Activated B cell treated with CpG ODN at 0.5 μM for 24 hours (primary cell): ENCODE measurements at regions of chr4 and their contacts with region 1.

Region 1: GRCh38 chr4:101790521-101791188 is at the start of gene BANK1:
- DNase-seq: peak; percentile 86
- ATAC-seq: peak; percentile 89
- H3K4me3 Mint-ChIP-seq: peak within 1 kb of the TSS; percentile 97
- H3K27ac Mint-ChIP-seq: peak within 1 kb of the TSS; percentile 99
- H3K4me1 Mint-ChIP-seq: peaks cover 66% of the 10 kb centered on the region
- H3K27me3 Mint-ChIP-seq: no peaks in the 10 kb centered on the region
- CTCF ChIP-seq: peak; percentile 37
- total RNA-seq, gene BANK1: 307 and 336 TPM in 2 replicates

Region 2: DNA sequence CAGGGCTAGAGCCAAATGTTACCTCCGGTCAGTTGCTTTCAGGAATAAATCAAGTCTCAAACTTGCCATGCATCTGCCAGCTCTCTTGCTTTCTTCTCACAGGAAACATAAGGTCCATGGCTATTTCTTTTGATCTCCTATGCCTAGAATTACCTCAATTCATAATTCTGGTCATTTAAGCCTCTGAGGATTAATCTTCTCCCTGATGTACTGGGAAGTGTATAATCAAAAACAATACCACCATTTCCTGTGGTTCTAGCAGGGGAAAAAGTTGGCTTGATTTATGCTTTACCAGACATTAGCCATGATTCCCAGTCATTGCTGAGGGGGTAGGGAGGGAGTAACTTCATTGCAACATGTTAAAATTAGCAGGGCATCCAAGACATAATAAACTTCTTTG is 1004.2 kb before region 1 on chr4:
- CTCF ChIA-PET with region 1: no interaction called
- POLR2A ChIA-PET with region 1: no interaction called
- intact Hi-C with region 1: no loop called
- DNase-seq: no peak
- ATAC-seq: no peak
- H3K4me3 Mint-ChIP-seq: no peak overlapping the region
- H3K27ac Mint-ChIP-seq: no peak overlapping the region
- H3K4me1 Mint-ChIP-seq: no peaks in the 10 kb centered on the region
- H3K27me3 Mint-ChIP-seq: peaks cover 4% of the 10 kb centered on the region
- CTCF ChIP-seq: no peak

Region 3: DNA sequence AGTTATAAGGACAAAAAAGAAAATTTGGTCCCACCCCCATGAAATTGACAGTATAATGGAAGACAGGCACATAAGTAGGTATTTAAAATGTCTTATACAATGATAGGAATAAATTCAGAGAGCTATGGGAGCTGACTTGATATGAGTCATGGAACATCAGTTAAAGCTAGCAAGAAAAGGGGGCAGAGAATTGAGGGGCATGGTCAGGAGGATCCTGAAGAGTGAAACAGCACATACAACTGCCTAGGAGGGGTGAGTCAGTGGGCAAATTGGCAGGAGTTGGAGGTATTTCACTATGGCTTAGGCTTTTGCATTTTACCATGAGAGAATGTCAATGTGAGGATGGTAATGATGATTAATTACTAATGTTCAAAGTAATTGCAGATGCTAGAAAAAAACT is 95.5 kb before region 1 on chr4:
- CTCF ChIA-PET with region 1: no interaction called
- POLR2A ChIA-PET with region 1: interaction called, 4 read pairs
- intact Hi-C with region 1: loop called (anchors 5 kb)
- DNase-seq: no peak
- ATAC-seq: no peak
- H3K4me3 Mint-ChIP-seq: no peak overlapping the region
- H3K27ac Mint-ChIP-seq: peak overlapping the region; percentile 51
- H3K4me1 Mint-ChIP-seq: peaks cover 82% of the 10 kb centered on the region
- H3K27me3 Mint-ChIP-seq: no peaks in the 10 kb centered on the region
- CTCF ChIP-seq: no peak

Region 4: DNA sequence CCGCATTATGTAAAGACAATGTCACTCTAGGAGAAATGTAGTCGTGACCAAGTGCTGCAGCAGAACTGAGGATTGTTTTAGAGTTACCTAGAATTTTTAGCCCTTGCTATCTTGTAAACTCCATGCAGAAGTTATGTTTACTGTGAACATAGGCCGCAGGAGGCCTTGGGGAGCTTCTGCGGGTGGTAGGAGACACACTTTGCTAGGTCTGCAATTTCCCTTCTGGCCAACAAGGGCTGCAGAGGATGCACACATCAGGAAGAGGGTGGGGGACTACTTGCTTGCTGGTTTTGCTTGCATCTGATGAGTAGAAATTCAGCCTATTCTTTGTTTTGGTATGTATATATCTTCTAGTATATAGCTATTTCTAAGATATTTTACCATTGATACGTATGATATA is 22.9 kb after region 1 on chr4:
- CTCF ChIA-PET with region 1: interaction called, 4 read pairs
- POLR2A ChIA-PET with region 1: interaction called, 188 read pairs
- intact Hi-C with region 1: loop called (anchors 1 kb)
- DNase-seq: peak; percentile 39
- ATAC-seq: peak; percentile 97
- H3K4me3 Mint-ChIP-seq: peak overlapping the region; percentile 81
- H3K27ac Mint-ChIP-seq: peak overlapping the region; percentile 92
- H3K4me1 Mint-ChIP-seq: peaks cover 83% of the 10 kb centered on the region
- H3K27me3 Mint-ChIP-seq: no peaks in the 10 kb centered on the region
- CTCF ChIP-seq: no peak

Region 5: GRCh38 chr4:101846550-101846949 is 55.9 kb after region 1 on chr4:
- CTCF ChIA-PET with region 1: no interaction called
- POLR2A ChIA-PET with region 1: interaction called, 10 read pairs
- intact Hi-C with region 1: loop called (anchors 2 kb)
- DNase-seq: no peak
- ATAC-seq: peak; percentile 25
- H3K4me3 Mint-ChIP-seq: peak overlapping the region; percentile 12
- H3K27ac Mint-ChIP-seq: peak overlapping the region; percentile 83
- H3K4me1 Mint-ChIP-seq: peaks cover 90% of the 10 kb centered on the region
- H3K27me3 Mint-ChIP-seq: no peaks in the 10 kb centered on the region
- CTCF ChIP-seq: no peak

Region 6: DNA sequence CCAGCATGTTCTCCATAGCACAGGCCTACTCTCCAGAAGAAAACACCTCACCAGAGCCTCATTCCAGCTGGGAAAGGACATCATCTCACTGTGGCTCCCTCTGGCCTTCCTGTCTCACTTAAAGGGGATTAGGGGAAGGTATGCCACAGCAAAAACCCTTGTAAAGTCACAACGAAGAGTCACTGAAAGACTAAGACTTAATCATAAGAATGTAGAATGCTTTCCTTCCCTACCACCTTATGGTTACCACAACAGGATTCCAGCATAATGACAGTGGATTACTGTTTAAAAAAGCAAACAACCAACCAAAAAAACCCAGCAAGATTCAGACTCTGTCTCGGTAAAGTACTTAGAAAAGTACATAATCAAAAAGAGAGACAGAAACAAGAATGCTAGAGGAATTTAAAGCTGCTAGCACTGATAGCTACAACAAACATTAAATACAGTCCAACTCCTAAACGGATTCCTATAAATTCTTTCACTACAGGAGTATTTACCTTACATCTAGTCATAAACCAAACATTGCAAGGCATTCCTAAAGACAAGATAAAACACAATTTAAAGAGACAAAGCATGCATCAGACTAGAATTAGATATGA is 74.9 kb after region 1 on chr4:
- CTCF ChIA-PET with region 1: no interaction called
- POLR2A ChIA-PET with region 1: interaction called, 8 read pairs
- intact Hi-C with region 1: loop called (anchors 2 kb)
- DNase-seq: no peak
- ATAC-seq: no peak
- H3K4me3 Mint-ChIP-seq: no peak overlapping the region
- H3K27ac Mint-ChIP-seq: peak overlapping the region; percentile 66
- H3K4me1 Mint-ChIP-seq: peaks cover 68% of the 10 kb centered on the region
- H3K27me3 Mint-ChIP-seq: no peaks in the 10 kb centered on the region
- CTCF ChIP-seq: no peak

Region 7: GRCh38 chr4:102263011-102263787 is 472.5 kb after region 1 on chr4:
- CTCF ChIA-PET with region 1: no interaction called
- POLR2A ChIA-PET with region 1: no interaction called
- intact Hi-C with region 1: loop called (anchors 5 kb)
- DNase-seq: no peak
- ATAC-seq: peak; percentile 79
- H3K4me3 Mint-ChIP-seq: no peak overlapping the region
- H3K27ac Mint-ChIP-seq: no peak overlapping the region
- H3K4me1 Mint-ChIP-seq: peaks cover 2% of the 10 kb centered on the region
- H3K27me3 Mint-ChIP-seq: no peaks in the 10 kb centered on the region
- CTCF ChIP-seq: peak; percentile 25